Posterior vena cava (tissue), 2 donors: ENCODE measurements at regions of chr2 and their contacts with region 1.

Region 1: GRCh38 chr2:237536617-237537379 is 29.6 kb upstream of the PRLH start:
- DNase-seq: peak; percentile 60

Region 2: DNA sequence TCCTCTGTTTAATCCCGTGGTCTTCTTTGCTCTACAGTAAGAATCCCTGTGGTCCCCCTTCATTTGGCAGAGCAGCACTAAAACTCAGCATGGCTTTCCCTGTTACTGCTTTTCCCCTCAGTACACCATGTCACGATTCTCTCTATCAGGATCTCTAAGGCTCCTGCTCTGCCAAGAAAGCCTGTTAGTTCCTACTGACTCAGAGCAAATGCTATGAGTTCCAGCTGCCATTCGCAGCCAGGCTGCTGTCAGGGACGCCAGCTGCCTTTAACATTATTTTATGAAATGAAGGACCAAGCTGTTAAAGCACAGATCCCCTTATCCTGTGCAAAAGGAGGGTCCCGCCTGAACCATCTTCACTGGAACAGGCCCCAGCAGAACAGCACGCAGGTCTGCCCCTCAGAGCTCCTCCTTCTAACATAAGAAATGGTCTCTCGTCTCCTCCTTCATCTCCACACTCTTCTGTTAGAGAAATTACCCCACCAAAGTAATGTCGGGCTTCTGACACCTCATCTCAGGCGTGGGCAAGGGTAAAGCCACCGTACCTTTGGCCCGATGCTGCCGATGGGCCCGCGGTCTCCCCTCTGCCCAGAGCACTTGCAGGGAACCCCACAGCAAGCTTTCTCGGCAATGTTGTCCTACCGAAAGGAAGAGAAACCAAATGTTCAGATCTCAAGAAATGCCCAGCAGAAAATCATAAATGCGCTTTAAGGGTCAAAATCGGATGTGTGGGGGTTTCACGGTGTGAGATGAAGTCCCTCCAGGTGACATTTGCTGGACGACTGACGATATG is 175.4 kb before region 1 on chr2:
- intact Hi-C with region 1: no loop called
- DNase-seq: no peak

Region 3: DNA sequence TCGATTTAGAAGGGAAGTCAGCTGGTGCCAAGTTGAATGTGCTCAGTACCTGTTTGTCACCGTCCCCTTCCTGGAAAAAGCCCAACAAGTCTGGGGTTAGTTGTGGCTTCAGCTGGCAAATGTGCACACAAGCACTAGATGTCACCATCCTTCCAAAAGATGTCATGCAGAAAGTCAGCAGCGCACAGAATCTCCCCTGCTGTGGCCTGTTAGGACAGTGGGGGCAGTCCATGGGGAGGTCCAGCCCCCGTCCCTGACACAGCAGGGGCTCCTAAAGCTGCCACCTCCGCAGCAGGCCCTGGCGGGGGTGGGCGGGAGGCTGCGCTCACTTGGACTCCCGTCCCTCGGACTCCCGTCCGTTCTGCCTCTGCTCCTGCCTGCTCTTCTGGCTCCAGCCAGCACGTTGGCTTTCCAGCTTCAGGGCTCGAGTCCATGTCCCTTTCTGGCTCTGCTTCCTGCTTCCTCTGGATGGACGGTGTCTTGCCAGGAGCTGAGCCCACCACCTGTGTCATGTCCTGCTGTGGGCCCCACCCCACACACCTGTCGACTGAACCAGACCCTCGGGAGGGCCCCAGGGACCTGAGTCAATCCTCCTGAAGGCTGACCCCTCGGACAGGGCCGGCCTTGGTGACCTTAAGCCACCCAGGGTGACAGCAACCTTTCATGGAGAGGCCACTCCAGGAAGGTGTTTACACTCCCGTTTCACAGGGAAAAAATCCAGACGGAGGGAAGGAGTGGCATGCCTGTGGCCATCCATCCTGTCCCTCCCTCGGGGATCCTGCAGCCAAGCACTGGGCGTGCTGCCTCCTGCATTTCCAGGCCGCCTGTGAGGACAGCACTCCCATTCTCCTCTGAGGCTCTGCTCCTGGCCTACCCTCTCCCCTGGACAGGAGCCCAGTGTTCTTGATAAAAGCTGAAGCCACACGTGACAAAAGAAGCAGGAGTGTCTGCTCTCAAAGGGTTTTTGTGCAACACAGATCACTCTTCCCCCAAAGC is 45.3 kb after region 1 on chr2:
- intact Hi-C with region 1: loop called in 1 of 2 experiments (anchors 1 kb)
- DNase-seq: no peak